ENCODE measurements at regions of chr11 and their contacts with region 1.

Region 1: DNA sequence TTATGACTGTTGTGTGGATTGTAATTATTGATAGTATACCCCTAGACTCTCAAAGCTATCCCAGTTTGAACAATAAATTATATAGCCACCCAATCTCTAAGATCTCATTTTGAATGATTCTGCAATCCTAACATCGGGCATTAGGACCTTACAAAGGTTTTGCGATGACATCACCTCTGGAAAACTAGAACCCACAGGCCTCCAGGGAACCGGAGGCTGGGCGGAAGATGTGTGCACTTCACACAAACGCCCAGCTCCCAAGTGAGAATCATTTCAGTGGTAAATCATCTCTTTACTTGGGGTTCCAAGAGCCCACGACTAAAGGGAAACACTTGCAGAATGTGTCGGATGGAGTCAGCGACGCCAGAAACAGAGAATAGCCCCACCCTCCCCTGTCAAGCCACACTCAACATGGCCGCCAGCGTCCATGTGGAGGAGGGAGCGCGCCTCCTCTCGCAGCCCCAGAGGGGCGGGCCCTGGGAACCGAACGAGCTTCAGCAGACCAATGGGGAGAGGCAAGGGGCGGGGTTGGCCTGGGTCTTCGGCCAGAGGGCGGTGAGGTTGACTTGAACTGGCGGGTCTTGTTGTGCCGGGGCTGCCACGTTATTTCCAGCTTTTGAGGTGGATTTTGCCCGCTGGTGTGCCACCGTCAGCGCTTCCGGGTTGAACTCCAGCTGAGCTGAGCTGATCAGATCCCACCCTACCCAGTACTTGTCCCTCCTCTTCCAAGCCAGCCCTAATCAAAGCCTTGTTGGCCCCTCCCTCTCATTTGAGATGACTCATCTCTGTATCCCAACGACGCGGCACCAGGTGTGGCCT is 8.4 kb upstream of the MRPL48 start:
- DNase-seq: peak; percentile 99 to 100
- H3K4me3 ChIP-seq: peak overlapping the region; percentile 68 to 93 (median 86)
- H3K27ac ChIP-seq: peak overlapping the region; percentile 91
- H3K4me1 ChIP-seq: peaks cover 2 to 6% (median 5%) of the 10 kb centered on the region in 4 experiments; a peak in 4 of 7 replicates
- H3K27me3 ChIP-seq: no peaks in the 10 kb centered on the region
- CTCF ChIP-seq: peak in 1 of 3 experiments; percentile 0; a peak in 1 of 4 replicates
- EP300 ChIP-seq: no peak
- POLR2A ChIP-seq: peak; percentile 71 to 97
- RAD21 ChIP-seq: no peak; a peak in 1 of 4 replicates

Region 2: GRCh38 chr11:73554671-73555320 is 224.5 kb before region 1 on chr11:
- CTCF ChIA-PET with region 1: no interaction called
- POLR2A ChIA-PET with region 1: no interaction called
- DNase-seq: no peak
- H3K4me3 ChIP-seq: no peak overlapping the region
- H3K27ac ChIP-seq: no peak overlapping the region
- H3K4me1 ChIP-seq: peaks cover 0 to 4% (median 2%) of the 10 kb centered on the region in 4 experiments; a peak in 3 of 7 replicates
- H3K27me3 ChIP-seq: no peaks in the 10 kb centered on the region
- CTCF ChIP-seq: no peak
- EP300 ChIP-seq: no peak
- POLR2A ChIP-seq: no peak
- RAD21 ChIP-seq: no peak

Region 3: GRCh38 chr11:73671701-73672100 is 107.6 kb before region 1 on chr11:
- CTCF ChIA-PET with region 1: no interaction called
- POLR2A ChIA-PET with region 1: no interaction called
- DNase-seq: no peak
- H3K4me3 ChIP-seq: no peak overlapping the region
- H3K27ac ChIP-seq: no peak overlapping the region
- H3K4me1 ChIP-seq: no peaks in the 10 kb centered on the region
- H3K27me3 ChIP-seq: no peaks in the 10 kb centered on the region
- CTCF ChIP-seq: no peak
- EP300 ChIP-seq: no peak
- POLR2A ChIP-seq: no peak
- RAD21 ChIP-seq: no peak

Region 4: DNA sequence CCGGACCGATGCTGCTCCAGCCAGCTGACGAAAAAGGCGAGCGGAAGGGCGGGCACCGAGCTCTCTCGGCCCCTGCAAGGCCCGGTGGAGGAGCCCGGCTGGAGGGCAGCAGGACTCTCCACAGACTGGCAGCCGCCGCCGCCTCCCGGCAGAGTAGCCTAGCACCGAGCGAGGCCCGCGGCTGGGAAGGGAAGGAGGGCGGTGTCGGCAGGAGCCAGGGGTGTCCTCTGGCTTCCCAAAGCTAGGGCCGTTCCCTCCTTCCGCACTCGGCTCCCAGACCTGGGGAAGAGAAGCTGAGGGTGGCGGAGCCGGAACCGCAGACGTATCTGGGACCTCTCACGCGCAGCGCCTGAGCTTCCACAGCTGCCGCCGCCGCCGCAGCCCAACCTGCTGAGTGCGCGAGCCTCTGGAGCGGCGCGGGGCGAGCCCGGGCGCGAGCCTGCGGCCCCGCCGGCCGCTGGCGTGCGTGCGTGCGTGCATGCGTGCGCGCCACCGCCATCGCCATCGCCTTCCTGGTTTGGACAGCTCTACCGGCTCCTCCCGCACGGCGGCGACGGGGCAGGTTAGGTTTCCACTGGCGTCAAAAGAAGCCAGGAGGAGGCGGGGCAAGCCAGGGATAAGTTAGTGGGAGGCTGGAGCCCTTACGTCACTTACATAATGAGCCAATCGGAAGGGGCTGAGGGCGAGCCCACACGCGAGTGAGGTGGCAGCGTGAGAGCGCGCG is 18.5 kb before region 1 on chr11 and contains the start of gene RAB6A:
- CTCF ChIA-PET with region 1: interaction called, 25 read pairs
- POLR2A ChIA-PET with region 1: interaction called, 126 read pairs
- DNase-seq: peak; percentile 100
- H3K4me3 ChIP-seq: peak within 1 kb of the TSS; percentile 92 to 95 (median 94)
- H3K27ac ChIP-seq: peak within 1 kb of the TSS; percentile 82; the same call in 1 of the 2 replicates
- H3K4me1 ChIP-seq: peaks cover 0 to 4% (median 0%) of the 10 kb centered on the region in 4 experiments; a peak in 1 of 7 replicates
- H3K27me3 ChIP-seq: no peaks in the 10 kb centered on the region
- CTCF ChIP-seq: peak; percentile 49 to 57 (median 54)
- EP300 ChIP-seq: no peak; a peak in 1 of 3 replicates
- POLR2A ChIP-seq: peak; percentile 58 to 76
- RAD21 ChIP-seq: peak; percentile 43 to 51; a peak in 3 of 4 replicates
- total RNA-seq, gene RAB6A: 88.6 and 89.3 TPM in 2 replicates

Region 5: DNA sequence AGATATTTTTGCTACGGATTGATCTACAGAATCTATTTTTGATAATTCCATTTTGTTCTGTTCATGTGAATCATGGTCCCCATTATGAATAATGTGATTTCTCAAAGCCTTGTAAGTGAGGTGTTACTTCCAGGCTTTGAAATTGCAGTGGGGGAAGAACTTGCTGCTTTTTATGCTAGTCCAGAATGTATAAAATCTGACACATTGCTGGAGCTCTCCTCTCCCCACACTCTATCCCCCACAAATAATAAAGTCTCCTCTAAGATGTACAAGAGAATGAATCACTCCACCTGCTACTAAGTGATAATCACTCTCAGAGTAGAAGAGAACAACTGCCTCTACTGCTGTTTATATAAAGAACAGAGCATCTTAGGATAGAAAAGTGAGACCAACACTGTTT is 12.5 kb before region 1 on chr11:
- CTCF ChIA-PET with region 1: interaction called, 25 read pairs
- POLR2A ChIA-PET with region 1: interaction called, 126 read pairs
- DNase-seq: no peak
- H3K4me3 ChIP-seq: no peak overlapping the region
- H3K27ac ChIP-seq: no peak overlapping the region
- H3K4me1 ChIP-seq: no peaks in the 10 kb centered on the region
- H3K27me3 ChIP-seq: no peaks in the 10 kb centered on the region
- CTCF ChIP-seq: no peak
- EP300 ChIP-seq: no peak
- POLR2A ChIP-seq: no peak
- RAD21 ChIP-seq: no peak

Region 6: DNA sequence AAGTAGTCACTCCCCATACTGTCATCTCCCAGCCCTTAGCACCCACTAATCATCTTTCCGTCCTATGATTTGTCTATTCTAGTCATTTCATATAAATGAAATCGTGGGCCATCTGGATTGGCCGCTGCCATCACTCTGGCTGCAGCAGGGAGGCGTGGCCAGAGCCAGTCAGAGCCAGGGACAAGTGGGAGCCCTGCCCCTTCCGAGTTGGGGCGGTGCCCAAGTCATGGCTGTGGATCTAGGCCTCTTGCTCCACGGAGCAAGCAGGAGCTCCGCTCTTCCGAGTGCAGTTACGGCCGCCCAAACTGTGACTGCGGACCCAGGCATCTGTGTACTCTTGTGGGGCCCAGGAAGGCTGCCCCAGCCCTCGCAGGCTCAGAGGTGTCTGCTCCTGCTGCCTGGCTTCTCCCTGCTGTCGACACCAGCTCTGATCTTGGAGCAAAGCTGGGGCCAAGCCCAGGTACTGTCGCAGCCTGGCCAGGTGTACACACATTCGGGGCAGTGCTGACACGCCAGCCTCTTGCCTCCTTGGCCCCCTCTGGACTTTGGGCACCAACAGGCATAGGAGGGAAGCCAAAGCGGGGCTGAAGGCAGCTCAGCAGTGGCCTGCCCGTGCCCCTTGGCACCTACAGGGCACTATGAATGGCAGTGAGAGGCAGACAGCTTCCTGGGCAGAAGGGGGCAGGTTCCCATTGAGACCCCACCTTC is 16.8 kb after region 1 on chr11:
- CTCF ChIA-PET with region 1: interaction called, 4 read pairs
- POLR2A ChIA-PET with region 1: interaction called, 18 read pairs
- DNase-seq: peak in 1 of 2 experiments; percentile 75
- H3K4me3 ChIP-seq: no peak overlapping the region
- H3K27ac ChIP-seq: no peak overlapping the region
- H3K4me1 ChIP-seq: peaks cover 0 to 2% (median 1%) of the 10 kb centered on the region in 4 experiments; a peak in 2 of 7 replicates
- H3K27me3 ChIP-seq: no peaks in the 10 kb centered on the region; a peak in 1 of 7 replicates
- CTCF ChIP-seq: no peak
- EP300 ChIP-seq: no peak
- POLR2A ChIP-seq: no peak
- RAD21 ChIP-seq: no peak

Region 7: DNA sequence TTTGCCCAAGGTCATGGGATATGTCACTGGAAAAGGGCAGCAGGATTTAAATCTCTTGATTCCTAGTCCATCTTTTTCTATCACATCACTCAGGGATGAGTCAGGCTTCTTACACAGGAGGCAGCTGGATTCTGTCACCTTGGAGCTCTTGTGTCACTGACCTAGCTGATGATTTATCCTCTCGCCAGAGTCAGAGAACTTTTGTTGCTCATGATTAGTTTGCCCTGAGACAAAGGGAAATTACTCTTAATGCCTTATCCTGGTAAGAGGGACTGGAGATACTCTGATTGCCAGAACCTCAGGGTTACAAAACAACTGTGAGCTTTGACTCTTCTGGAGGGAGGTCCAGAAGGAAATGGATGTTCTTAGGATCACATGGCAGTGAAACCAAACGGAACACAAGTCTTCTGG is 87.3 kb after region 1 on chr11:
- CTCF ChIA-PET with region 1: no interaction called
- POLR2A ChIA-PET with region 1: interaction called, 10 read pairs
- DNase-seq: no peak
- H3K4me3 ChIP-seq: no peak overlapping the region
- H3K27ac ChIP-seq: no peak overlapping the region
- H3K4me1 ChIP-seq: peaks cover 0 to 2% (median 0%) of the 10 kb centered on the region in 4 experiments; a peak in 1 of 7 replicates
- H3K27me3 ChIP-seq: no peaks in the 10 kb centered on the region
- CTCF ChIP-seq: no peak
- EP300 ChIP-seq: no peak
- POLR2A ChIP-seq: peak in 1 of 2 experiments; percentile 8; a peak in 2 of 3 replicates
- RAD21 ChIP-seq: no peak

Region 8: GRCh38 chr11:73876424-73877300 is 97.4 kb after region 1 on chr11 and contains the starts of genes COA4 and PAAF1:
- CTCF ChIA-PET with region 1: no interaction called
- POLR2A ChIA-PET with region 1: interaction called, 11 read pairs
- DNase-seq: peak; percentile 96 to 97
- H3K4me3 ChIP-seq: peak within 1 kb of the TSS; percentile 57 to 100 (median 89)
- H3K27ac ChIP-seq: peak within 1 kb of the TSS; percentile 89
- H3K4me1 ChIP-seq: peaks cover 4 to 9% (median 7%) of the 10 kb centered on the region in 4 experiments; a peak in 6 of 7 replicates
- H3K27me3 ChIP-seq: no peaks in the 10 kb centered on the region
- CTCF ChIP-seq: no peak
- EP300 ChIP-seq: no peak
- POLR2A ChIP-seq: peak; percentile 88 to 97
- RAD21 ChIP-seq: 0 out of 4 replicates have a peak, but pooled peaks of 1 of the 2 experiments have one; percentile 1
- total RNA-seq, gene COA4: 177 TPM in 2 replicates
- total RNA-seq, gene PAAF1: 28.8 TPM in 2 replicates